ENCODE measurements at regions of chr20 and their contacts with region 1.

Region 1: DNA sequence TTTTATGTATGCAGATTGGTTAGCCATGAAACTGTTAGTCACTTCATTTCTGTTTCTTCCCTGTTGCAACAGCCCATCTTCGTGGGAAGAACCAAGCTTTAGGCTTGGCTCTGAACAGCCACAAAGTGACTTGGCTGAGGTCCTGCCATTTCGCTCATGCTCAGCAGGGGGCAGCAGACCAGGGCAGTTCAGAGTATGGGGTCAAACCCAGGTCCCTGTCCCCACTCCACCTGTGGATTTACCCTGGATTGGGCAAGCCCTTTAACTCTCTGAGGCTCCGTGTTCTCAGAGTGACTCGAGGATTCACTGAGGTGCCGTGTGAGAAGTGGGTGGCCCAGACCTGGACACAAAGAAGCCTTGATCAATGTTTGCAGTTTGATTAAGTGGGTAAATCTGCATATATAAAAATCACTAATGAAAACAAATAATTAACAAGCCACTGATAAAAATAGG is 19.8 kb upstream of the MAP1LC3A start:
- DNase-seq: no peak
- H3K4me3 ChIP-seq: no peak overlapping the region
- CTCF ChIP-seq: peak; percentile 89

Region 2: GRCh38 chr20:34516247-34517113 is 22.2 kb before region 1 on chr20 and contains the start of gene DYNLRB1:
- CTCF ChIA-PET with region 1: interaction called, 11 read pairs
- POLR2A ChIA-PET with region 1: no interaction called
- DNase-seq: peak; percentile 82
- H3K4me3 ChIP-seq: peak within 1 kb of the TSS; percentile 88
- CTCF ChIP-seq: no peak

Region 3: GRCh38 chr20:34522969-34523871 is 15.5 kb before region 1 on chr20:
- CTCF ChIA-PET with region 1: interaction called, 33 read pairs
- POLR2A ChIA-PET with region 1: interaction called, 3 read pairs
- DNase-seq: peak; percentile 29
- H3K4me3 ChIP-seq: no peak overlapping the region
- CTCF ChIP-seq: peak; percentile 65

Region 4: GRCh38 chr20:34549291-34549928 is 10.7 kb after region 1 on chr20:
- CTCF ChIA-PET with region 1: interaction called, 32 read pairs
- POLR2A ChIA-PET with region 1: interaction called, 3 read pairs
- DNase-seq: no peak
- H3K4me3 ChIP-seq: no peak overlapping the region
- CTCF ChIP-seq: no peak

Region 5: DNA sequence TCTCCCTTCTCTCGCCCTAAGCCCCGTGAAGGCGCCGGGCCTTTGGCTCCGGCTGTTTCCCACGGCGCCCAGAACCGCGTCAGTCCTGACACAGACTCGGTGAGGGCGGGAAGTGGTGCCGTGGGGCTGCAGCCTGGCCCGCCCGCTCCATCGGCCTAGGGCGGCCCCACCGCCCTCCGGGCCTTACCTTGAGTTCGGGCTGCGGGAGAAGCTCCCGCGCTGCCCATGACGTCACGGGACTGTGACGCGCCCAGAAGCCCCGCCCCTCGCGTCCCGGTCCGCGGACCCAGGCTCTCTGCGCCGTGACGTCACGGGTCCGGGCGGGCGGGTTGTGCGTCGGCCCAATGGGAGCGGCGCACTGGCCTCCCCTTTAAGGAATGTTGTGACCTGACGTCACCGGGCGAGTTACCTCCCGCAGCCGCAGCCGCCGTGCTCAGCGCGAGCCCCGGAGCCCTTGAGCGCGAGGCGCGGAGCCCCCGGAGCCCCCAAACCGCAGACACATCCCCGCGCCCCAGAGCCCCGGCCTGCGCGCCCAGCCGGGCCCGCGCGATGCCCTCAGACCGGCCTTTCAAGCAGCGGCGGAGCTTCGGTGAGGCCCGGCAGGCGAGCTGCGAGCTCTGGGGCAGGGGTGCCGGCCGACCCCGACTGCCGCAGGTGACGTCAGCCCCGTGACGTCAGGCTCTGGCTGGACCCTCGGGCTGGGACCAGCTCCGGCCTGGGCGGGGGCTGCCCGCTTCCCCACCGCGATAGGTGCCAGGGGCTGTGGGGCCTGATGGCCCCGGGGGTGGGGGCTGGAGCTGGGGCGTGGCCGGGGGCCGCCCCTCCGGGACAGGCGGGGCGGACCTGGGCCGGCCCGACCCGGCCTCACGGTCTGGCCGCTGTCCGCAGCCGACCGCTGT is 19.9 kb after region 1 on chr20 and contains the start of gene MAP1LC3A:
- CTCF ChIA-PET with region 1: interaction called, 25 read pairs
- POLR2A ChIA-PET with region 1: no interaction called
- DNase-seq: peak; percentile 69
- H3K4me3 ChIP-seq: peak within 1 kb of the TSS; percentile 71
- CTCF ChIP-seq: no peak